Heart left ventricle (tissue), 16 donors: ENCODE measurements at regions of chr10 and their contacts with region 1.

Region 1: DNA sequence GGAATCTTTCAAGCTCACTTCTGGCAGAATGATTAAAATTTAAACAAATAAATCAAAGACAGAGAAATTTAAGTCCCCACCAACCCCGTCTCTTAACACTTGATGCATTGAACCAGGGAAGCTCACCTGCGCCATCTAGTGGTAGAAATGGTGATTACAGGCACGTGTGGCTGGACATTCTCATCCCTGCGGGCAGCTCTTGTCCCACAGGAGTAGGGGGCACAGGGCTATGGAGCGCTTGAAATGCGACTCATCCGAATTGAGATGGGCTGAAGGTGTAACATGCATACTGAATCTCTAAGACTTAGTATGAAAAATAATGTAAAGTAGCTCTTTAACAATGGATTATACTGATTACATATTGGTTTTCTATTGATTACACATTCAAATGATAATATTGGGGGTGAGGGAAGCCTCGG is 24.8 kb upstream of the SLIT1 start:
- DNase-seq: peak in 4 of 5 donors; percentile 45 to 63 (median 53)
- ATAC-seq: peak; percentile 49 to 73 (median 60)
- H3K4me3 ChIP-seq: no peak overlapping the region
- H3K27ac ChIP-seq: no peak overlapping the region
- H3K4me1 ChIP-seq: no peaks in the 10 kb centered on the region
- H3K27me3 ChIP-seq: no peaks in the 10 kb centered on the region
- CTCF ChIP-seq: peak in 11 of 12 donors; percentile 88 to 100 (median 97)
- POLR2A ChIP-seq: no peak

Region 2: DNA sequence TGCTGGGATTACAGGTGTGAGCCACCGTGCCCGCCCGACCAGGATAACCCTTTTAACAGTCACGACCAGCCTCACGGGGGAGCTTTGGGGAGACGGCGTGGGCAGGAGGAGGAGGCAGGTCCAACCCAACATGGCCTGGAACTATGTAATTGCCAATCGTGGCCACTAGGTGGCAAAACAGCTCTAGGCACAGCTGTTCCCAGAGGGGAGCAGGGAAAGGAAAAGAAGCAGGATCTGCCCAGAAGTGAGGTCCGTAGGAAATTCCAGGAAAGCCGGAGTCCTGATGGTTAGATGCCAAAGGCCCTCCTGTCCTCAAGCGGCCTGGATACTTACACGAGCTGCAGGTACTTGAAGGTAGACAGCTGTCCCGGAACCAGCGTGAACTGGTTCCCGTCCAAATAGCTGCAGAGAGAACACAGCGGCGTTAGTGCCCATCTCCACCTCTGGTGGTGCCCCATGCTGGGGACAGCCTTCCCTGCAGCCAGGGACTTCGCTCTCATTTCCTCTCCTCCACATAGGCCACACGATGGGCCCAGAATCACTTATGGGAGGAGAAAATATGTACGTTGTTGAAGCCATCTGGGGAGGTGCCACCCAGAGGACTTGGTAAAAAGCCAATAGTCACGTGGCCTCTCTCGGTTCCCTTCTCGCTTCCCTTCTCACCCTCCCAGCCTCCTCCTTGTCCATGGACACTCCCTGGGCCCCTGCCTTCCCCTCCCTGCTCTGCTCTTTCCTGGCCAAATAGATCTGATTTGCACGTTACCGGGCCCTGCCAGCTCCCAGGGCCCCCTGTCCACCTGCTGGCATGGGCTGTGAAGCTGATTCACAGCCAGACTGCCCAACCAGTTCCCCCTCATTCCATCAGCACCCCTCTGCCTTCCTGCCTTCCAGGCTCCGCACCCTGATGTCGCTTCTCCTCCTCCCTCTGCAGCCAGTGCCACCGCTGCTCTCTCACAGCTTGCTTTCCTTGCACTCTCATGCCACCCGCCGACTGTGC is 172.9 kb before region 1 on chr10:
- intact Hi-C with region 1: loop called in 1 of 10 experiments (anchors 2 kb)
- DNase-seq: peak; percentile 69 to 81 (median 78)
- ATAC-seq: peak; percentile 89 to 95 (median 90)
- H3K4me3 ChIP-seq: peak overlapping the region in 11 of 12 donors; percentile 29 to 61 (median 46)
- H3K27ac ChIP-seq: peak overlapping the region in 3 of 12 donors; percentile 5 to 30 (median 6)
- H3K4me1 ChIP-seq: peaks cover 0 to 12% (median 10%) of the 10 kb centered on the region in 12 donors
- H3K27me3 ChIP-seq: no peaks in the 10 kb centered on the region
- CTCF ChIP-seq: peak; percentile 72 to 92 (median 86)
- POLR2A ChIP-seq: no peak